ENCODE measurements at regions of chr4 and their contacts with region 1.

Region 1: DNA sequence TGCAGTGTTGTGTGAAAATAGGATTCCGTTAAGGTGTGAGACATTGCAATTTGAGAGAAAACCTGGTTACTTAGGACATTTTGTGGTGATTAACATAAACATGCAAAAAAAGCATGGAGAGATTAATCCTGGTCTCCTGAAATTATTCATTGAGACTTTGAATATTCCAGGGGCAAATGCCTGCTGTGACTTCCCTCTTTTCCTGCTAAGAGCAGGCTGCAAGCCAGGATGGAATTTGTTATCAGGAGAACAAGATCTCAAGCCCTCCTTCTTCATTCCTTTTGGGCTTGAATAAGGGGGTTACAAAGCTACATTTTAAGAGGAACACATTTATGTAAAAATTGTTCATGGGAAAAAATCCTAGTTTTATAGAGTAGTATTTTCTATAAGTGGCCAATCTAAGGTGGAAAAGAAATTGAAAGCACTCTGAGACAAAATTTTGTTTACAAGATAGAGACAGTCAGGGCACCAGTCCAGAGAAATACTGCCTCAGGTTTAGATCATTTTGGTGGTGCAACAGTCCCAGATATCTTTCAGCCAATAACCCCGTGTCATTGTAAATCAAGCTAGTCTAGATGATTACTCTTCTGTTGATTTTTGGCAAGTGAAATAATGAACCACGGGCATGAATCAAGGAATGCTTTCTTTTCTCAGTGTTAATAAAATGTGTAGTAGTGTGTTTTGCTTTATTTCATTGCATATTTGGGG is 1528.3 kb upstream of the AGA start:
- DNase-seq: no peak
- H3K4me3 ChIP-seq: no peak overlapping the region
- H3K4me3 Mint-ChIP-seq: no peak overlapping the region
- H3K27ac Mint-ChIP-seq: no peak overlapping the region
- H3K4me1 ChIP-seq: no peaks in the 10 kb centered on the region
- H3K4me1 Mint-ChIP-seq: no peaks in the 10 kb centered on the region
- H3K27me3 ChIP-seq: no peaks in the 10 kb centered on the region
- H3K27me3 Mint-ChIP-seq: peaks cover 10% of the 10 kb centered on the region
- CTCF ChIP-seq: no peak

Region 2: GRCh38 chr4:178871476-178871875 is 99.1 kb before region 1 on chr4:
- CTCF ChIA-PET with region 1: no interaction called
- POLR2A ChIA-PET with region 1: no interaction called
- intact Hi-C with region 1: no loop called
- DNase-seq: no peak
- H3K4me3 ChIP-seq: no peak overlapping the region
- H3K4me3 Mint-ChIP-seq: no peak overlapping the region
- H3K27ac Mint-ChIP-seq: no peak overlapping the region
- H3K4me1 ChIP-seq: no peaks in the 10 kb centered on the region
- H3K4me1 Mint-ChIP-seq: no peaks in the 10 kb centered on the region
- H3K27me3 ChIP-seq: no peaks in the 10 kb centered on the region
- H3K27me3 Mint-ChIP-seq: no peaks in the 10 kb centered on the region
- CTCF ChIP-seq: no peak

Region 3: DNA sequence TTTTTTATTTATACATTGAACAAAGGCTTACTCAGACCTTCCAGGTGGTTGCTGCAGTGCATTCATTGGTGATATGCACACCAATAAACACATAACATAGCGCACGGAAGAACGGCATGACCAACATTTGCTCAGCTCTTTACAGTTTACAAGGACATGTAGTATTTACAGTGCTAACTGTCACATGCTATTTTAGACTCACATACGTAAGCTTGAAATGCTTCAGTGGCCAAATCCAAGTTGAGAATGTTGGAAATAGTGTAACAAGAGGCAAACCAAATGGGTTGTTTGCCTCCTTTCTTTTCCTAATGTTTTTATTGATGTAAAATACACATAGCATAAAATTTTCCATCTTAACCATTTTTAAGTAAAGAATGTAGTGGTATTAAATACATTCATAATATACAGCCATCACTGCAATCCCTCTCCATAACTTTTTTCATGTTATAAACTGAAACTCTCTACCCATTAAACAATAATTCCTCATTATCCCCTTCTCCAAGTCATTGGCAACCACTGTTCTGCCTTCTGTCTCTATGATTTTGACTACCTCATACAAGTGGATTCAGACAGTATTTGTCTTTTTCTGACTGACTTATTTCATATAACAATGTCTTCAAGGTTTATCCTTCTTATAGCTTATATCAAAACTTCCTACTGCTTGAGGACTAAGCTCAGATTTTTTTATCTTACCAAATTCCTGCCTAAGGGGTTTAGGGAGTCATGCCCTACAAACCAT is 194.6 kb after region 1 on chr4:
- CTCF ChIA-PET with region 1: no interaction called
- POLR2A ChIA-PET with region 1: no interaction called
- intact Hi-C with region 1: no loop called
- DNase-seq: no peak
- H3K4me3 ChIP-seq: no peak overlapping the region
- H3K4me3 Mint-ChIP-seq: no peak overlapping the region
- H3K27ac Mint-ChIP-seq: no peak overlapping the region
- H3K4me1 ChIP-seq: no peaks in the 10 kb centered on the region
- H3K4me1 Mint-ChIP-seq: no peaks in the 10 kb centered on the region
- H3K27me3 ChIP-seq: no peaks in the 10 kb centered on the region
- H3K27me3 Mint-ChIP-seq: peaks cover 13% of the 10 kb centered on the region
- CTCF ChIP-seq: no peak

Region 4: GRCh38 chr4:179307297-179308136 is 336.9 kb after region 1 on chr4:
- CTCF ChIA-PET with region 1: no interaction called
- POLR2A ChIA-PET with region 1: no interaction called
- intact Hi-C with region 1: loop called (anchors 10 kb)
- DNase-seq: peak; percentile 34 to 58
- H3K4me3 ChIP-seq: no peak overlapping the region
- H3K4me3 Mint-ChIP-seq: no peak overlapping the region
- H3K27ac Mint-ChIP-seq: no peak overlapping the region
- H3K4me1 ChIP-seq: no peaks in the 10 kb centered on the region
- H3K4me1 Mint-ChIP-seq: no peaks in the 10 kb centered on the region
- H3K27me3 ChIP-seq: no peaks in the 10 kb centered on the region
- H3K27me3 Mint-ChIP-seq: no peaks in the 10 kb centered on the region
- CTCF ChIP-seq: peak; percentile 59 to 60

Measured in Caco-2 (cell line).